ENCODE measurements at regions of chr22 and their contacts with region 1.

Region 1: GRCh38 chr22:28009272-28009827 is 90.3 kb upstream of the PITPNB start:
- DNase-seq: peak; percentile 62
- ATAC-seq: peak; percentile 86
- H3K4me3 Mint-ChIP-seq: no peak overlapping the region
- H3K27ac Mint-ChIP-seq: no peak overlapping the region
- H3K4me1 Mint-ChIP-seq: no peaks in the 10 kb centered on the region
- H3K27me3 Mint-ChIP-seq: no peaks in the 10 kb centered on the region
- CTCF ChIP-seq: peak; percentile 91

Region 2: GRCh38 chr22:26756675-26757293 is 1252.6 kb before region 1 on chr22:
- CTCF ChIA-PET with region 1: no interaction called
- POLR2A ChIA-PET with region 1: no interaction called
- intact Hi-C with region 1: loop called (anchors 10 kb)
- DNase-seq: peak; percentile 38
- ATAC-seq: peak; percentile 47
- H3K4me3 Mint-ChIP-seq: no peak overlapping the region
- H3K27ac Mint-ChIP-seq: no peak overlapping the region
- H3K4me1 Mint-ChIP-seq: no peaks in the 10 kb centered on the region
- H3K27me3 Mint-ChIP-seq: no peaks in the 10 kb centered on the region
- CTCF ChIP-seq: no peak

Region 3: DNA sequence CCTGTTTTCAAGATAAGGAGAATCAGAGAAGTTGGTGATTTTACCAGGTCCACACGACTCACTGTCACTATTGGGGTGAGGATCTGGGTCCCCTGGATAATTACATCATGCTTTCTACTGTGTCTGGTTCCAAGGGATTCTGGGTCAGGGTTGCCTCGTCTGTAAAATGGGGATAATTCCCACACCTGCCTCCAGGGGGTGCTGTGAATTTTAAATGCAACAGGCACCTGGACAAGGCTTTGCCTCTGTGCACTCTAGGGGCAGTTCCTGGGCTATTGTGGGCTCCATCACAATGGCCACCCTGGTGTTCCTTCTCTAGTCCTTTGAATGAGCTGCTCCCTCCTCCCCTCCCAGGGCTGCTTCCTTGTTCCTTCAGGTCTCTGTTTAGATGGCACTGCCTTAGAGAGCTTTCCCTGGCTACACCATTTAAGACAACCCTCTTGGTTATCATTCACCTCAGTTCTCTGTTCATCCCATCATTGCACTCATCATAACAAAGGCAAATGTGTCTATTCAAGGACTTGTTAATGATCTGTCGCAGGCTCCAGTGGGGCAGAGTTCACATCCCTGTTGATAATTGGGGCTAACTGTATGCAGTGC is 1173.3 kb before region 1 on chr22:
- CTCF ChIA-PET with region 1: no interaction called
- POLR2A ChIA-PET with region 1: interaction called, 4 read pairs
- intact Hi-C with region 1: loop called (anchors 5 kb)
- DNase-seq: no peak
- ATAC-seq: no peak
- H3K4me3 Mint-ChIP-seq: no peak overlapping the region
- H3K27ac Mint-ChIP-seq: no peak overlapping the region
- H3K4me1 Mint-ChIP-seq: no peaks in the 10 kb centered on the region
- H3K27me3 Mint-ChIP-seq: no peaks in the 10 kb centered on the region
- CTCF ChIP-seq: no peak

Region 4: DNA sequence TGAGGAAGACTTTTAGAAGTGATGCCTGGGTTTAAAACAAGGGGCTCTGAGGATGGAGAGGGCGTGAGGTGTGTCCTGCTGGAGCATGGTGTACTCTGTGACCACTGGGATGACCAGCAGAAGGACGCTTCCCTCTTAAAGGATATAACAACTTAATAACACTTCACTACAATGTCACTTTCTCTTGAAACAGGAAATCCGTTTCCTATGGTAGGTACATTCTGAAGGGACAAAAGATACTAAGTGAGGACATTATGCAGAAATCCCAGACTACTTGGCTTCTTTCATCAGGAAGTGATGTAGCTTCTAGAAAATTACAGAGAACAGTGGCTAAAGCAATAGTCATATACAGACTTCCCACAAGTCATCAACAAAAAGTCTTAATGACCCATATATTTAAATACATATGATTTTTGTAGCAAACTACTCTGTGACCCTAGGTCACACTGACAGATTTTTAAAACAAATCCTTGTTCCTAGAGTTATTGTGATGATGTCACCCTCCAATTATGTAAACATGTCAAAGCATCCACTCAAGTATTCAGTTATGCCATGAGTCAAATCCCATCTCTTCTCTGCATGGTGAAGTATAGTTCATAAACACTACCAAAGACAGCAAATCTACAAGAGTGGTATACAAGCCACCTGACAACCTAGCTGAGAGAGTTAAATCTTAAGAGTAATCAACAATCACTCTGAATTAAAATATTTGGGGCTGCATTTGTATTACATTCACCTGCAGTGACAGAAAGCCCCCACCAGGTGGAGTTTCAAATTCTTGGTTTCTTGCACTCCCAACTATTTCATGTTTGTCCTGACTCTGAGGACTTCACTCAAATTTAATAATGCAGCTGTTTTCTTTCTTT is 123.1 kb before region 1 on chr22:
- CTCF ChIA-PET with region 1: interaction called, 117 read pairs
- POLR2A ChIA-PET with region 1: interaction called, 3 read pairs
- intact Hi-C with region 1: loop called (anchors 1 kb)
- DNase-seq: no peak
- ATAC-seq: no peak
- H3K4me3 Mint-ChIP-seq: no peak overlapping the region
- H3K27ac Mint-ChIP-seq: no peak overlapping the region
- H3K4me1 Mint-ChIP-seq: no peaks in the 10 kb centered on the region
- H3K27me3 Mint-ChIP-seq: no peaks in the 10 kb centered on the region
- CTCF ChIP-seq: no peak